ENCODE measurements at regions of chr4 and their contacts with region 1.

Region 1: DNA sequence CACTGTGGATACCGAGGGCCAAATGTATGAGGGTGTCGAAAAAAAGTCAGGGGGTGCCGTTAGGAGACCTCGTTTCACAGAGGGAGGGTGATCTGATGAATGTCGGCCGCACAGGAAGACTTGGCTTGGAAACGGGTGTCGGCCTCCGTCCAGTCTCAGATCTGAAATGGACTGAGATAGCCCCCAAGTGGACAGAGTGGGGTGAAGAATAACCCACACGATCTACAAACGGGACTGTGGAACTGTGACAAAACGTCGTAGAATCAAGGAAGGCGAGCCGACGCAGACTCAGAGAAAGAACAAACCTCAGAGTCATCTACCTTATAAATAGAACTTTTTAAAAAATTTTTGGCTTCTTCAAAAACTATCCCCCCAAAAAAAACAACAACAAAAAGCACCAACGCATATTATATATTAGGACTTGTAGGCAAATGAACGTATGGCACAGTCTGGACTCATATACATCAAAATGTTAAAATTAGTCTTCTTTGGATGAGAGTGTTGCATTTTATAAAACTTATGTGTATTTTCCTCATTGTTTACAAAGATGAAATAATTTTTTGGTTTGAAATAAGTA is 63.8 kb upstream of the IRF2 start:
- DNase-seq: peak; percentile 92
- H3K4me3 ChIP-seq: peak overlapping the region; percentile 69 to 86 (median 71)
- H3K27ac ChIP-seq: peak overlapping the region; percentile 97
- H3K4me1 ChIP-seq: peaks cover 28% of the 10 kb centered on the region
- H3K27me3 ChIP-seq: no peaks in the 10 kb centered on the region
- CTCF ChIP-seq: peak; percentile 60 to 66
- POLR2A ChIP-seq: no peak

Region 2: GRCh38 chr4:183887351-183887750 is 650.8 kb before region 1 on chr4:
- CTCF ChIA-PET with region 1: no interaction called
- POLR2A ChIA-PET with region 1: no interaction called
- dilution Hi-C with region 1: no loop called
- intact Hi-C with region 1: no loop called
- DNase-seq: no peak
- H3K4me3 ChIP-seq: no peak overlapping the region
- H3K27ac ChIP-seq: no peak overlapping the region
- H3K4me1 ChIP-seq: no peaks in the 10 kb centered on the region
- H3K27me3 ChIP-seq: no peaks in the 10 kb centered on the region
- CTCF ChIP-seq: no peak
- POLR2A ChIP-seq: no peak

Region 3: GRCh38 chr4:184196862-184197331 is 341.2 kb before region 1 on chr4:
- CTCF ChIA-PET with region 1: no interaction called
- POLR2A ChIA-PET with region 1: no interaction called
- dilution Hi-C with region 1: no loop called
- intact Hi-C with region 1: no loop called
- DNase-seq: no peak
- H3K4me3 ChIP-seq: no peak overlapping the region
- H3K27ac ChIP-seq: no peak overlapping the region
- H3K4me1 ChIP-seq: no peaks in the 10 kb centered on the region
- H3K27me3 ChIP-seq: no peaks in the 10 kb centered on the region
- CTCF ChIP-seq: no peak
- POLR2A ChIP-seq: no peak

Region 4: DNA sequence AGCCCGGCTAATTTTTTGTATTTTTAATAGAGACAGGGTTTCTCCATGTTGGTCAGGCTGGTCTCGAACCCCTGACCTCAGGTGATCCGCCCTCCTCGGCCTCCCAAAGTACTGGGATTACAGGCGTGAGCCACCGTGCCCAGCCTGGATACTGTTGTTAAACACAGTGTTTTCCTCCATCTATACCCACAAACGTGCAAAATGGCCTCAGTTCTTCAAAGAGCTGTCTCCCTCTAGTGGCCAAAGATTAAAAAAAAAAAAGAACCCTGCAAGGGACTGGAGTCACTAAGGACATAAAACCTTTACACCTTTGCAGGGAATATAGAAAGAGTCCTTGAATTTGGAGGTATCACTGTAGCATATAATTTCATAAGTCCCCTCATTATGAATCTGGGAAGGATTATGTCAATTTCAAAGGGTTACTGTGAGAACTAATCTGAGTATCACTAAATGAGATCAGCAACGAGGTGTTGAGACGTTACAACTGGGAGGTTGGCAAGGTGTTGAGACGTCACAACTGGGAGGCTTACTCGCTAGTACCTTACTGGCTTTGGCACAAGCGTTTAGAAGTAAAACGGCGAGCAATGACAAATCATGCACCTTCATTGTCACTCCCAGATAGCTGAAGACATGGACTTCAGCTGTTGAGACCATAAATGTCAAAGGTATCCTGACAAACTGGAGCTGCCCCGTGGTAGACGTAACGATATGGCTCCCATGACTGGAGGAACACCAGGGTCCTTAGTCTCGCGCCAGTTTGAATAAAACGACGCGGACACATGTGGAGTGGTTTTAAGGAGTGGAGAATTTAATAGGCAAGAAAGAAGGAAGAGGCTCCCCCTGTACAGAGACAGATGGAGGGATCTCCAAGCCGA is 287.1 kb before region 1 on chr4:
- CTCF ChIA-PET with region 1: interaction called, 10 read pairs
- POLR2A ChIA-PET with region 1: no interaction called
- dilution Hi-C with region 1: no loop called
- intact Hi-C with region 1: no loop called
- DNase-seq: peak; percentile 49
- H3K4me3 ChIP-seq: no peak overlapping the region
- H3K27ac ChIP-seq: no peak overlapping the region
- H3K4me1 ChIP-seq: no peaks in the 10 kb centered on the region
- H3K27me3 ChIP-seq: peaks cover 0 to 3% of the 10 kb centered on the region in 2 experiments
- CTCF ChIP-seq: peak; percentile 47 to 49
- POLR2A ChIP-seq: no peak

Region 5: DNA sequence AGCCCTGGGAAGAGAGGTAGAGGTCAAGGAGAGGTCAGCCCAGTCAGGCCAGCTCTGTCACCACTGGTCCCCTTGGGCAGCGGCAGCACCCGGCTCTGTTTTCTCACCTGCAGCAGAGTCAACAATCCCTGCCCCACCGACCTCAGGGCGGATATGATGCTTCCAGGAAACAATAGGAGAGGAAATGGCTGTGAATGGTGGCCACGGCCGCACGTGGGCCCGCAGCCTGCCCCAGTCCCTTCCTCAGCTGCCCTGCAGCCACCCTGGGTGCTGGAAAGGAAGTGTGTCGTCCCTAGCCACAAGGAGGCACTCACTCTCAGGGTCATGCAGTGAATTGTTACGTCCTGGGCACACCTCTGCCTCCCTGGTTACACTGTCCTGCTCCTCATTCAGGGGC is 227.9 kb before region 1 on chr4:
- CTCF ChIA-PET with region 1: no interaction called
- POLR2A ChIA-PET with region 1: no interaction called
- dilution Hi-C with region 1: no loop called
- intact Hi-C with region 1: loop called (anchors 1 kb)
- DNase-seq: peak; percentile 28
- H3K4me3 ChIP-seq: no peak overlapping the region
- H3K27ac ChIP-seq: peak overlapping the region; percentile 21
- H3K4me1 ChIP-seq: no peaks in the 10 kb centered on the region
- H3K27me3 ChIP-seq: no peaks in the 10 kb centered on the region
- CTCF ChIP-seq: peak; percentile 20 to 22
- POLR2A ChIP-seq: no peak

Region 6: GRCh38 chr4:184384056-184384809 is 153.9 kb before region 1 on chr4:
- CTCF ChIA-PET with region 1: no interaction called
- POLR2A ChIA-PET with region 1: no interaction called
- dilution Hi-C with region 1: no loop called
- intact Hi-C with region 1: loop called (anchors 1 kb)
- DNase-seq: peak; percentile 74
- H3K4me3 ChIP-seq: peak overlapping the region in 2 of 3 experiments; percentile 37 to 71
- H3K27ac ChIP-seq: peak overlapping the region; percentile 71
- H3K4me1 ChIP-seq: peaks cover 52% of the 10 kb centered on the region
- H3K27me3 ChIP-seq: no peaks in the 10 kb centered on the region
- CTCF ChIP-seq: no peak
- POLR2A ChIP-seq: no peak

Region 7: GRCh38 chr4:184649026-184649970 is 111.2 kb after region 1 on chr4 and contains the starts of genes CASP3 and PRIMPOL:
- CTCF ChIA-PET with region 1: no interaction called
- POLR2A ChIA-PET with region 1: interaction called, 4 read pairs
- dilution Hi-C with region 1: no loop called
- intact Hi-C with region 1: loop called (anchors 1 kb)
- DNase-seq: peak; percentile 97
- H3K4me3 ChIP-seq: peak within 1 kb of the TSS; percentile 49 to 89 (median 78)
- H3K27ac ChIP-seq: peak within 1 kb of the TSS; percentile 96
- H3K4me1 ChIP-seq: peaks cover 44% of the 10 kb centered on the region
- H3K27me3 ChIP-seq: no peaks in the 10 kb centered on the region
- CTCF ChIP-seq: peak in 1 of 2 donors; percentile 37
- POLR2A ChIP-seq: peak; percentile 87
- total RNA-seq, gene CASP3: 54.5 and 66.1 TPM in 2 replicates
- total RNA-seq, gene PRIMPOL: 11.1 and 13.6 TPM in 2 replicates

Region 8: GRCh38 chr4:184733654-184734524 is 195.8 kb after region 1 on chr4 and contains the start of gene CENPU:
- CTCF ChIA-PET with region 1: no interaction called
- POLR2A ChIA-PET with region 1: no interaction called
- dilution Hi-C with region 1: no loop called
- intact Hi-C with region 1: loop called (anchors 1 kb)
- DNase-seq: peak; percentile 99
- H3K4me3 ChIP-seq: peak within 1 kb of the TSS; percentile 75 to 91 (median 88)
- H3K27ac ChIP-seq: peak within 1 kb of the TSS; percentile 72
- H3K4me1 ChIP-seq: peaks cover 16% of the 10 kb centered on the region
- H3K27me3 ChIP-seq: no peaks in the 10 kb centered on the region
- CTCF ChIP-seq: no peak
- POLR2A ChIP-seq: peak; percentile 68
- total RNA-seq, gene CENPU: 35.6 and 37.9 TPM in 2 replicates

Measured in endothelial cell of umbilical vein (primary cell).